Activated naive CD4-positive, alpha-beta T cell treated with anti-CD3 and anti-CD28 coated beads, Interleukin-2, amount 10 ng/mL, durations not matched to agents 7 days and 5 days (primary cell): ENCODE measurements at regions of chr6 and their contacts with region 1.

Region 1: GRCh38 chr6:52263709-52264540 is 19.6 kb upstream of the IL17F start:
- DNase-seq: peak; percentile 78
- H3K4me3 Mint-ChIP-seq: no peak overlapping the region
- H3K27ac Mint-ChIP-seq: peak overlapping the region; percentile 29
- H3K4me1 Mint-ChIP-seq: peaks cover 13% of the 10 kb centered on the region
- H3K27me3 Mint-ChIP-seq: no peaks in the 10 kb centered on the region

Region 2: DNA sequence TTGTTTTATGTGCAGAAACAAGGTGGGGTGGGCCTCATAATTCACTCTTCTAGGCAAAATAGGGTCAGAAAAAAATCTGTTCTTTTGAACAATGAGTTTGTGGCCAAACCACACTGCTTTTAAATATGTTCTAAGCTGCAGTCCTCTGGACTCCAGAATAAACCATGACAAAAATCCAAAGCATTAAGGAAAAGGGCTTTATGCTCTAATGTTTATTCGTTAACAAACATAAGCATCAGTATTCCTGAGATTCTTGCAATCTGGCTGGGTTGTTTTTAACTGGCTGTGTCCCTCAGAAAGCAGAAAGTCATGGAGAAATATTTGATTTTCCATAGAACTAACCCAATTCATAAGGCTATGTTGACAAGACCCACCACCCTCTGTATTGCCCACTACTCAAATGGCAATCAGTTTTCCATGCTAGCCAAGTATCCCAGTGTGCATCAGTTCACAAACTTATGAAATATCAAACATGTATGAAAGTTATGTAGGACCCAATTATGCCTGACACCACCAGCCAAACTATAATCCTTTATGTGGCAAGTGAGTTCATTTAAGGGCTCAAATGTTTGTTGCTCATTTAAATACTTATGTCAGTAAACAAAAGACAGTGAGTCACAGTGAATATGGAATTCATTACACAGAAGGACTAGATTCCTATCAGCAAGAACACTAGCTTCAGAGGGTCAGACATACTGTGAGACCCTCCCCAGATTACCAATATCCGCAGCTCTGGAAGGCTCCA is 221.6 kb before region 1 on chr6:
- CTCF ChIA-PET with region 1: no interaction called
- DNase-seq: no peak
- H3K4me3 Mint-ChIP-seq: no peak overlapping the region
- H3K27ac Mint-ChIP-seq: no peak overlapping the region
- H3K4me1 Mint-ChIP-seq: no peaks in the 10 kb centered on the region
- H3K27me3 Mint-ChIP-seq: no peaks in the 10 kb centered on the region

Region 3: DNA sequence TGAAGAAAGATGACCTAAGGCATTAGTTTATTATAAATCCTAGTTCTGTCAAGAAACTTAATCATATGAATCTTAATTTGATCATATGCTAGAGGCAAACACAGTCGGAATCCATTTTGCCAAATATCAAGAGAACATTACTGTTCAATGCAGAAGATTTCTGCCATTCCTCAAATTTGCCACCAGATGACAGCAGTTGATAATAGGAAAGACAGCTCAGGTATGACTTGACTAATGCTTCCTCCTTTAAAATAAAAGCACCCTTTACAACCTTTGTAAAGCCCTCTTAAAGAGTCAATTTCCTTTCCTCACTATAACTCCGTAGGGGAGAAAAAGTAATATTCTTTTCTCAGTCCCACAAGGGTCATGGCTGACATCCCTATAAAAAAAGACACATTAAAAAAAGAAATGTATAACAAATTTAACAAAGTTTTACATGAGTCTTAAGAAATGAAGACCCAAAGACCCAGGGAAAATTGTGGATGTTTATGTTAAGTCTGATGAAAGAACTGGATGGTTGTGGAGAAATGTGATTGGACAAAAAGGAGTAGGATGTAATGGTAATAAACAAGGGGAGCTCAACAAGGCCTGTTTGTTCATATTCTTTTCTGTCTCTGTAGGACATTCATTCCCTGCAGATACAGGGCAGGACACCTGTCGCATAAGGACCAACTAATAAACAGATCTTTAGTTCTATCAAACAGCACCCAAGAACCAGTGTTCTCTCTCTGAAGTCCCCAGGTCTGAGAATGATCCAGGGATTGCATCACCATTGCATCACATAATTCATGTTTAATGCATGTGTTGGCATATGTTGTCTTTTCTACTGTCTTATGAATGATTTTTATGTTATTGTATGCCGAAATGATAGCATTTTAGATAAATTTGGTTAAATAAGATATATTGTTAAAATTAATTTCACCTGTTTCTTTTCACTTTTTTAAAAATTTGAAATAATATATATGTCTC is 100.7 kb before region 1 on chr6:
- CTCF ChIA-PET with region 1: interaction called, 61 read pairs
- DNase-seq: no peak
- H3K4me3 Mint-ChIP-seq: no peak overlapping the region
- H3K27ac Mint-ChIP-seq: no peak overlapping the region
- H3K4me1 Mint-ChIP-seq: peaks cover 3% of the 10 kb centered on the region
- H3K27me3 Mint-ChIP-seq: peaks cover 7% of the 10 kb centered on the region

Region 4: GRCh38 chr6:52210227-52210626 is 53.7 kb before region 1 on chr6:
- CTCF ChIA-PET with region 1: interaction called, 18 read pairs
- DNase-seq: no peak
- H3K4me3 Mint-ChIP-seq: no peak overlapping the region
- H3K27ac Mint-ChIP-seq: no peak overlapping the region
- H3K4me1 Mint-ChIP-seq: peaks cover 12% of the 10 kb centered on the region
- H3K27me3 Mint-ChIP-seq: peaks cover 19% of the 10 kb centered on the region

Region 5: GRCh38 chr6:52241819-52242218 is 22.1 kb before region 1 on chr6:
- CTCF ChIA-PET with region 1: interaction called, 21 read pairs
- DNase-seq: no peak
- H3K4me3 Mint-ChIP-seq: no peak overlapping the region
- H3K27ac Mint-ChIP-seq: no peak overlapping the region
- H3K4me1 Mint-ChIP-seq: no peaks in the 10 kb centered on the region
- H3K27me3 Mint-ChIP-seq: peaks cover 20% of the 10 kb centered on the region

Region 6: DNA sequence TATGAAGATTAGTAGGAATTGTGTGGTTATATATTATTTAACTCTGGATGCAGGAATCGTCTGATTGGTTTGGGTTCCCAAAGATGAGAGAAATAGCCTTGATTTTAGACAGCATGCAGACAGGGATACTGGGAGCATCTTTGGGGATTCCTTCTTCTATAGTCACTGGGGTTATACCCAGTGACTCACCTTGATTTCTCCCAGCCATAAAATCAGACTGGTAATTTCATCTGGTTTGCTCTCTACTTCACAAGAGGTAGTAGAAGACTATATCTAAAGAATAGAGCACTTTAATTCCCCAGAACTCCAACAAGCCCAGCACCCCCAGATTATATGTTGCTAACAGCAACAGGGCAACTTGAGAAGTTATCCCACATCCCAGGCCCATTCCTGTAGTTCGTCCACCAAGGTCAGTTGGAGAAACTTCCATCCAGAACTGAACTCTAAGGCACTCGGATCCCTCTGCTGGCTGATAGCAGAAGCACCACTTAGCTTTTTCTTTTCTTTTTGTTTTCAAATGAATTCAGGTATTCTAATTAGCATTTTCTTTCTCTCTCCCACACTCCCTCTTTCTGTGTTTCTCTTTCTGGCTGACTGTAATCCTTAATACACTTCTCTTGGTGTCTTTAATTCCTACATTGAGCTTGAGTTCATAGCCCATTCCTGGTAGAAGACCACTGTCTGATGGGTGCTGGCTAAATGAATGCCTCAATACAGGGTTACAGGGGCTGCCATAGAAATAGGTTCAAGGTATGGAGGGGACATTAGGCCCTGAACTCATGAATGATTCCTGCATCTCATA is 135.8 kb after region 1 on chr6:
- CTCF ChIA-PET with region 1: interaction called, 10 read pairs
- DNase-seq: peak; percentile 60
- H3K4me3 Mint-ChIP-seq: no peak overlapping the region
- H3K27ac Mint-ChIP-seq: peak overlapping the region; percentile 97
- H3K4me1 Mint-ChIP-seq: peaks cover 68% of the 10 kb centered on the region
- H3K27me3 Mint-ChIP-seq: no peaks in the 10 kb centered on the region